Uterus (tissue), 4 donors: ENCODE measurements at regions of chr9 and their contacts with region 1.

Region 1: GRCh38 chr9:96661711-96662110 is 6.6 kb upstream of the PRXL2C start:
- DNase-seq: no peak
- H3K4me3 ChIP-seq: no peak overlapping the region
- H3K27ac ChIP-seq: no peak overlapping the region
- H3K4me1 ChIP-seq: no peaks in the 10 kb centered on the region
- H3K27me3 ChIP-seq: no peaks in the 10 kb centered on the region
- CTCF ChIP-seq: no peak
- POLR2A ChIP-seq: no peak

Region 2: GRCh38 chr9:96327694-96328352 is 333.9 kb before region 1 on chr9:
- intact Hi-C with region 1: loop called (anchors 10 kb)
- DNase-seq: peak; percentile 29 to 48
- H3K4me3 ChIP-seq: no peak overlapping the region
- H3K27ac ChIP-seq: no peak overlapping the region
- H3K4me1 ChIP-seq: no peaks in the 10 kb centered on the region
- H3K27me3 ChIP-seq: no peaks in the 10 kb centered on the region
- CTCF ChIP-seq: peak; percentile 71 to 90 (median 83)
- POLR2A ChIP-seq: no peak

Region 3: GRCh38 chr9:96553070-96553469 is 108.6 kb before region 1 on chr9:
- intact Hi-C with region 1: no loop called
- DNase-seq: no peak
- H3K4me3 ChIP-seq: no peak overlapping the region
- H3K27ac ChIP-seq: peak overlapping the region in 1 of 2 donors; percentile 15
- H3K4me1 ChIP-seq: no peaks in the 10 kb centered on the region
- H3K27me3 ChIP-seq: no peaks in the 10 kb centered on the region
- CTCF ChIP-seq: no peak
- POLR2A ChIP-seq: no peak